Activated B cell treated with CpG ODN at 0.5 μM for 24 hours (primary cell): ENCODE measurements at regions of chr6 and their contacts with region 1.

Region 1: DNA sequence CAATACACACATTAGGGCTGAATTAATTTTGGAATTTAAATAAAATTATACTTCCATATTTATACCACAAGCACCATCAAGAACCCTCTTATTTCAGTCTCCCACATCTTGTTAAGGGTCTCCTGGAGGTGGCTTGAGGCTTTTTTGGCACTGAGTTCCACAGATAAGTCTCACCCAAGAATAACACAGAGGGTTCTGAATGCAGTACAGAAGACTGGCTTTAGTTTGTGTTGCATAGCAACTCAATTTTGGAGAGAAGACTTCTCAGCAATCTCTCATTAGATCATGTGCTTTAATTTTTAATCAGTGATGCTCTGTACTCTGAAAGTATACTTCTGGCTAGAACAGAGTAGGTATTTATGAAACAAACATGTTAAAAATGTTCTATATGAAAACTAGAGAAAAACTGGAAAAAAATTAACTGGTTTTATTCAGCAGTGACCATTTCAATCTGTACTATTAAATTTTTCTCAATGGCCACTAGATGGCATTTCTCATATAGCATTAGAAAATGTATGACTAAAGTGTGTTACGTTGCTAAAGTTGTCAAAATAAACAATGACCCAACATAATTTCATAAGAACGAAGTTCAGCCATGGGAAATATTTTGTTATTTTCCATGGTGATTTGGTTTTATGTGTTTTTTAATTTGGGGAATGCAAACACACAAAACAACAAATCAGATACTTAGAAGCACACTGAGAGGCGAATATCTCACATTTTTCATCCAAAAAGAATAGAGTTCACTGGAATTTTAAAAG is 32.7 kb upstream of the MAP7 start:
- DNase-seq: no peak
- ATAC-seq: peak; percentile 28
- H3K4me3 Mint-ChIP-seq: no peak overlapping the region
- H3K27ac Mint-ChIP-seq: no peak overlapping the region
- H3K4me1 Mint-ChIP-seq: peaks cover 5% of the 10 kb centered on the region
- H3K27me3 Mint-ChIP-seq: no peaks in the 10 kb centered on the region
- CTCF ChIP-seq: no peak

Region 2: DNA sequence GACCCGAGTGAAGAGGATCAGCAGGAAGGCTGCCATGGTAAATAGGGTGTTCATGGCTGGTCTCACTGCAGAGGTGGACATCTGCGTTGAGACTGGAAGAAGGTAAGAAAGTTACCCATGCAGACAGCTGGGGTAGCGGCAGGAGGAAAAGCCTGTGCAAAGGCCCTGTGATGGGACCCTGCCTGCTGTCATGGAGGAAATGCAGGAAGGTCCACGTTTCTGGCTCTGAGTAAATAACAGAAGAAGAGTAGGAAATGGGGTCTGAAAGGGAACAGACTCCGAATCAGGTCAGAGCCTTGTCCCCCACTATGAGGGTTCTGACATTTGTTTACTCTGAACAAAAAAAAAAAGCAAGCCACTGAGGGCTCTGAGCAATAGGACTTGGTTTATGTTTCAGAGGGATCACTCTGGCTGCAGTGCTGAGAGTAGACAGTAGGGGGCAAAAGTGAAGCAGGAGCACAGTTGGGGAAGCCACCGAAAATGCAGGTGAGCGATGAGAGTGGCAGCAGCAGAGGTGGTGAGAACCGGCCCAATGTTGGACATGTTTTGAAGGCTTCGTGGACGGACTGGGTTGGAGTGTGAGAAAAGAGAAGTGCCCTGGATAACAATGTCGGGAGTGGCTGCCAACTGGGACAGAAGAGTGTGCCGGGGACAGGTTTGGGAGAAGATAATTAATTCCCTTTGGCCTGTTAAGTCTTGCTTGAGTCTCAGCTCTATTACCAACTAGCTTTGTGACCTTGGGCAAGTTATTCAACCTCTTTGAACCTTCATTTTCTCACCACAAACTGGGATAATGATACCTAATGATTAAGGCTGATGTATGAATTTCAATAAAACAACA is 25.3 kb after region 1 on chr6:
- CTCF ChIA-PET with region 1: interaction called, 4 read pairs
- POLR2A ChIA-PET with region 1: no interaction called
- intact Hi-C with region 1: loop called (anchors 2 kb)
- DNase-seq: peak; percentile 53
- ATAC-seq: peak; percentile 99
- H3K4me3 Mint-ChIP-seq: no peak overlapping the region
- H3K27ac Mint-ChIP-seq: no peak overlapping the region
- H3K4me1 Mint-ChIP-seq: peaks cover 3% of the 10 kb centered on the region
- H3K27me3 Mint-ChIP-seq: no peaks in the 10 kb centered on the region
- CTCF ChIP-seq: peak; percentile 63